Dendritic cell treated with granulocyte-macrophage colony-stimulating factor and Interleukin-4, amounts not matched to agents 40 ng/mL and 50 ng/mL, for 4 days (primary cell): ENCODE measurements at regions of chr18 and their contacts with region 1.

Region 1: DNA sequence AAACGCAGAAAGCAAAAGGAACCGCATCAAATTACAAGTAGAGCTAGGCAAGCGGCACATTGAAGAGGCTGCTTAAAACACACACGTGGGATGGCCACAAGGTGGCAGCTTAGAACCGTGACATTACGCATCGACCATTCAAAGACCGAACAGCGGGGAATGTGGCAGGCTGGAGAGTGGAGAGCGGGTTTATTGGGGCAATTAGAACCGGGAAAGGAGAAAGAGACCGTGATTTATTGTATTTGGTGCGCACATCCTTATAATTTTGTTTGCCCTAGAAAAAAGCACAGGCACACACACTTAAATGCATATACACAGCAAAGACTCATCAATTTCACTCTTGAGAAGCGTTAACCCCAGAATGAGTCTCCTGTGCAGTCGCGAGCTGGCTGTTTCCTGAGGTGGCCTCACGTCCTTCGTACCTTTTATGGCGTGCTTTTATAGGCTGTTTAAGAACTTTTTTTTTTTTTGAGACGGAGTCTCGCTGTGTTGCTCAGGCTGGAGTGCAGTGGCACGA is 31.7 kb upstream of the MEP1B start:
- H3K4me3 Mint-ChIP-seq: peak overlapping the region; percentile 61
- H3K27ac Mint-ChIP-seq: no peak overlapping the region
- H3K4me1 Mint-ChIP-seq: peaks cover 13% of the 10 kb centered on the region
- H3K27me3 Mint-ChIP-seq: peaks cover 7% of the 10 kb centered on the region

Region 2: DNA sequence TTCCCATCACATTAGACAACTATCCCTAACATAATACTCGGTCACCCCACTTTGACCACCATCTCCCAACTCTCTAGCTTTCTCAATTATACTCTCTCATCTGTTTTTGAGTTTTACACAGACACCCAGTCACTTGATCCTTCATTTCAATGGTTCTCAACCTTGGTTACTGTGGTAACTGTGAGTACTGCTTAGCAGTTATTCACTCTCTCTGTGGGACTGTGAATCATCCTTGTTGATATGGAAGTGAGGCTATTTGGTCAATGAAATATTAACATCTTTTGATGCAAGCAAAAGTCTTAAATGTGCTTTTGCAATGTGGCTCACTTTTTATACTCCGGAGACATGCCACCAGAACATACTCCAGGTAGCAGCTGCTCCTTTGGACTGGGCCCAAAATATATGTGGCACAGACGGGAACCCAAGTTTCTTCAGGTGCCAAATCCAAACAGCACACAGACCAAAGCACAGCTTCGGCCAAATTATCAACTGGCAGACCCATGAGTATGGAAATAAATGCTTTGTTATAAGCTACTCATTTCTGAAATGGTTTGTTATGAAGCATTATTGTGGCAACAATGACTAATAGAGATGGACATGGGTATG is 322.5 kb before region 1 on chr18:
- intact Hi-C with region 1: no loop called
- H3K4me3 Mint-ChIP-seq: no peak overlapping the region
- H3K27ac Mint-ChIP-seq: no peak overlapping the region
- H3K4me1 Mint-ChIP-seq: no peaks in the 10 kb centered on the region
- H3K27me3 Mint-ChIP-seq: no peaks in the 10 kb centered on the region

Region 3: DNA sequence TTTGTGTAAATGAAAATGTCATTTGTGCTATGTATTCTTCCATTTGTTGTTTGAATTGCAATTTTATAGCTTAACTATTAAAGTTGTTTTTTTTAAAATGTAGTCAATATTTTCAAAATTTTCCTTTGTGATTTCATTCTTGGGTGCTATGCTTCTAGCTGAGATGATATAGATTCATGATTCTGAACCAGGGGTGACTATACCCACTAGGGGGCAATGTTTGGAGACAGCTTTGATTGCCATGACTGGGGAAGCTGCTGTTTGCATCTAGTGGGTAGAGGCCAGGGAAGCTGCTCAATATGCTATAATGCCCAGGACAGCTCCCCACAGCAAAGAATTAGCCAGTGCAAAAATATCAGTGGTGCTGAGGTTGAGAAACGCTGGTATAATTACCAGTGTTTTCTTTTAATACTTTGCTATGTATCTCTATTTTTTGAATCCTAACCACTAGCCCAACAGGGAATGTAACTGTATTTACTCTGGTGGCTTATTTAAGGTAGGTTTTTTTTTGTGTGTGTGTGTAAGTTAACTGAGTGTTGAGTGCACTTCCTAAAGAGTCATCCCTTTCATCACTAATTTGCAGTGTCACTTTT is 131.4 kb after region 1 on chr18:
- intact Hi-C with region 1: loop called (anchors 5 kb)
- H3K4me3 Mint-ChIP-seq: no peak overlapping the region
- H3K27ac Mint-ChIP-seq: no peak overlapping the region
- H3K4me1 Mint-ChIP-seq: no peaks in the 10 kb centered on the region
- H3K27me3 Mint-ChIP-seq: peaks cover 3% of the 10 kb centered on the region

Region 4: GRCh38 chr18:32470713-32471633 is 312.8 kb after region 1 on chr18 and contains the start of gene GAREM1:
- intact Hi-C with region 1: loop called (anchors 5 kb)
- H3K4me3 Mint-ChIP-seq: peak within 1 kb of the TSS; percentile 82
- H3K27ac Mint-ChIP-seq: peak within 1 kb of the TSS; percentile 41
- H3K4me1 Mint-ChIP-seq: peaks cover 30% of the 10 kb centered on the region
- H3K27me3 Mint-ChIP-seq: peaks cover 69% of the 10 kb centered on the region